BJ (cell line): ENCODE measurements at regions of chr19 and their contacts with region 1.

Region 1: GRCh38 chr19:43519436-43520088 is 7.4 kb downstream of the ETHE1 start:
- DNase-seq: no peak
- H3K4me3 ChIP-seq: no peak overlapping the region
- H3K27me3 ChIP-seq: no peaks in the 10 kb centered on the region
- CTCF ChIP-seq: peak; percentile 89

Region 2: DNA sequence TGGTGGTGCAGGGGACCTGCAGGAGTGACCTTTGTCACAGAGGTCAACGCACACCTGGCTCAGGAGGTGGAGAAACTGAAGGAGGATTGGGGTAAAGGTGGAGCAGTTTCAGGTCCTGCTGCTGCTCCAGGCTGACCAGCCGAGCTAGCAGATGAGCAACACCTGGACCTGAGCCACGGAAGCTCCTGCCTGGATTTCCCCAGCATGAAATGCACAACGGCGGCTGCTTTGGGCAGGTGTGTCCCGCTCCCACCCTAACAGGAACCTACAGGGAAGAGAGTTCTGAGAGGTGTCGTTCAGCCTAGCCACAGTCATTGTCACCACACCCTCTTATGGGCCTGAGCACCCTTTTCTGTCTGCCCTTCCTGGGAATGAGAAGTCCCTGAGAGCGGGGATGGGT is 181.8 kb before region 1 on chr19:
- CTCF ChIA-PET with region 1: no interaction called
- POLR2A ChIA-PET with region 1: no interaction called
- DNase-seq: no peak
- H3K4me3 ChIP-seq: no peak overlapping the region
- H3K27me3 ChIP-seq: peaks cover 4% of the 10 kb centered on the region; the same call in 1 of the 2 replicates
- CTCF ChIP-seq: no peak

Region 3: DNA sequence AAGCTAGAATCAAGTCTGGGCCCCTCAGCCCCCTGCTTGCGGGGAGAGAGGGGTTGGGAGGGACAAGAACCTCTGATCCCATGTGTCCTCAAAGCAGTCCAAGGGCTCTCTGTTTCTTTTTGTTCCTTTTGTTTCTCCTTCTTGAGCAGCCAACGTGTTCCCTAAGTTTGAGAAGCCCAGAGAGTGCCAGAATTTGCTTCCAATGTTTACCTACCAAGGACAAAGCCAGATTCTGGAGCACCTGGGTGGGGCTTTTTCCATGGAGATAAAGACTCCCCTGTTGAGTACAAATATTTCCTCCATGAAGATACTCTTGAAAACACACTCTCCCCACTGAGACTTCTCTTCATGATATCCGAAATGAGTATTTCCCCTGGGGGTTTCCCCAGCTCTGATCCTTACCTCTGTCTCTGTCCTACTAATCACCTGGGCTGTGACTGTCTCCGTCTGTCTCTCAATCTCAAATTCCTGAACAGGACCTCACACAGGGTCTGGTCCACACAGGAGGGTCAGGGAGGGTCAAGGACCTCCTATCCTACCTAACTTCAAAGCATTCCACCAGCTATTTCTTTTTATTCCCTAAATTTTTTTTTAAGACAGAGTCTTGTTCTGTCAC is 138.7 kb before region 1 on chr19:
- CTCF ChIA-PET with region 1: no interaction called
- POLR2A ChIA-PET with region 1: no interaction called
- DNase-seq: no peak
- H3K4me3 ChIP-seq: no peak overlapping the region
- H3K27me3 ChIP-seq: peaks cover 3% of the 10 kb centered on the region
- CTCF ChIP-seq: no peak

Region 4: DNA sequence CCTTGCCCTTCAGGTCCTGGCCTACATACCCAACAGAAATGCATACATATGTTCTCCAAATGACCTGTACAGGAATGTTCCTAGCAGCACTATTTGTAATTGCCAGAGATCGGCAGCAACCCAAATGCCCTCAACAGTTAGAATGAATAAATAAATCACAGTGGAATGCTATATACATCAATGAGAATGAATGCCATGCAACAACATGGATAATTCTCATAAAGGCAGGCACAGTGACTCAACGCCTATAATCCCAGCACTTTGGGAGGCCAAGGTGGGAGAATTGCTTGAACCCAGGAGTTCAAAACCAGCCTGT is 86.2 kb before region 1 on chr19:
- CTCF ChIA-PET with region 1: interaction called, 36 read pairs
- POLR2A ChIA-PET with region 1: no interaction called
- DNase-seq: no peak
- H3K4me3 ChIP-seq: no peak overlapping the region
- H3K27me3 ChIP-seq: peaks cover 2% of the 10 kb centered on the region
- CTCF ChIP-seq: no peak

Region 5: DNA sequence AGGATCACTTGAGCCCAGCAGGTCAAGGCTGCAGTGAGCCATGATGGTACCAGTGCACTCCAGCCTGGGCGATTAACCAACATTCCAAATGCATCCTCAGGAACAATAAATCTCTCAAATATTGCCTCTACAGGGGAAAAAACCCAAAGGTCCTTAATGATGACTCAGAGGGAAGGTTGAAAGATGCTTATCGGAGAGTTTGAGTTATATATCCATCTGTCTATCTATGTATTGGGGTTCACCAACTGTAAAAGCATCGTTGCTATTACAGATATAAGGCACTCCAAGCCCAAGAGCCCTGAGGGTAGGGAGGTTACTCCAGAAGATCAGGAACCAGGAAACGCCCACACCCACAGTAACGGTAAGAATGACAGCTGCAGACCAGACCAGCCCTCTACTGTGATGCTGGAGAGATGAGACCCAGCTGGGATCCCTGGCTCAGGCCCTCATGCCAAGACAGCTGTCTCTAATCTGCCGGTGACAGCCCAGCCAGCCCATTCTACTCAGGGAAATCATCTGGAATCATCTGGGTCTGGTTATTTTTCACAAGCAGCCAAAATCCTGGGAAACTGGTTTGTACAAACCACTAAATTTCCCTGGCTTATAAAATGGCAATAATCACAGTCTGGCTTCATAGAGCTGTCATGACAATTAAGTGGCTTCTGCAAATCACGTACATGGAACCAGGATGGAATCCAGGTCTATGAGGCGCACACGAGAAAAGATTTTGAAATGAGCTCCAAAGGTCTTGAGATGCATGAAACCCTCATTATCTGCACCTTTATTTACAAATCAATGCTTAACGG is 81.1 kb before region 1 on chr19:
- CTCF ChIA-PET with region 1: interaction called, 214 read pairs
- POLR2A ChIA-PET with region 1: no interaction called
- DNase-seq: peak; percentile 98
- H3K4me3 ChIP-seq: no peak overlapping the region
- H3K27me3 ChIP-seq: peaks cover 2% of the 10 kb centered on the region
- CTCF ChIP-seq: no peak

Region 6: DNA sequence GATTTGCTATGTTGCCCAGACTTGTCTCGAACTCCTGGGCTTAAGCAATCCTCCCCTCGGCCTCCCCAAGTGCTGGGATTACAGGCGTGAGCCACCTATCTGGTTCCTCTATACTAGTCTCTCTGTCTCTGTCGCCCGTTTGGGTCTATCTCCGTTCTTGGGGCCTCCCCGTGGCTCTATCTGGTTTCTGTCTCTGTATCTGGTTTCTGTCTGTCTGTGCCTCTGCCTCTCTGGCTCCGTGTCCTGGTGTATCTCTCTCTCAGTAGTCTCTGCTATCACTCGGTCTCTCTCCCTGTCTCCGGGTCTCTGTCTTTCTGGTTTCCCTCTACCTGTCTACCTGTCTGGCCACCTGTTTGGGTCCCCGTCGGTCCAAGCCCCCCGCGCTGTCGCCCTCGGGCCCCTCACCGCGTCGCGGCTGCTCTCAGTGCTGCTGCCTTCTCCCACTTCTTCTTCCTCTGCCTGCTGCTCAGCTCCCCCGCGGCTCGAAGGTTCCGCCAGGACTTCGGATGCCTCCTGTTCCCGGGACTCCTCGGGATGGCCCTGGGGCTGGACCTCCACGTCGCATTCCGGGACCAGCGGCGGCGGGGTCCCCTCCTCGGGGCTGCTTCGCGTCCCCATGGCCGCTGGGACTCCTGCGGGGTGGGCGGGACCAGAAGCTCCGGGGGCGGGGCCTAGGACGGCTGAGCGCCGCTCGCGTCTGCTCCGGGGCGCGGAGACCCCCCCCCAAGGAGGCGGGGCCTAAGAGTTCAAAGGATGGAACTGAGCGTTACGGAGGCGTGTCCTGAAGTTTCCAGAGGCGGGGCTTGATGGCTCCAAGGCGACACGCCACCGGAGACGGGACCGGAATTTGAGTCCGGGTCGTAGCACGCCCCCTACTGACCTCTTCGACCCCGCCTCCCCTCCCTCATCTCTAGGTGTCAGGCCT is 15.8 kb before region 1 on chr19:
- CTCF ChIA-PET with region 1: interaction called, 12 read pairs
- POLR2A ChIA-PET with region 1: no interaction called
- DNase-seq: no peak
- H3K4me3 ChIP-seq: peak overlapping the region; percentile 53
- H3K27me3 ChIP-seq: no peaks in the 10 kb centered on the region
- CTCF ChIP-seq: no peak; the same call in 1 of the 2 replicates

Region 7: GRCh38 chr19:43575156-43575950 is 55.8 kb after region 1 on chr19 and contains the starts of genes PINLYP and XRCC1:
- CTCF ChIA-PET with region 1: no interaction called
- POLR2A ChIA-PET with region 1: no interaction called
- DNase-seq: peak; percentile 92
- H3K4me3 ChIP-seq: peak within 1 kb of the TSS; percentile 99
- H3K27me3 ChIP-seq: no peaks in the 10 kb centered on the region
- CTCF ChIP-seq: no peak
- polyA plus RNA-seq, gene PINLYP: 2.0 and 2.2 TPM in 2 replicates
- polyA plus RNA-seq, gene XRCC1: 22.8 and 30.8 TPM in 2 replicates